Posterior vena cava (tissue), 2 donors: ENCODE measurements at regions of chr19 and their contacts with region 1.

Region 1: GRCh38 chr19:36090910-36091695 is 19.8 kb upstream of the OVOL3 start:
- DNase-seq: no peak

Region 2: DNA sequence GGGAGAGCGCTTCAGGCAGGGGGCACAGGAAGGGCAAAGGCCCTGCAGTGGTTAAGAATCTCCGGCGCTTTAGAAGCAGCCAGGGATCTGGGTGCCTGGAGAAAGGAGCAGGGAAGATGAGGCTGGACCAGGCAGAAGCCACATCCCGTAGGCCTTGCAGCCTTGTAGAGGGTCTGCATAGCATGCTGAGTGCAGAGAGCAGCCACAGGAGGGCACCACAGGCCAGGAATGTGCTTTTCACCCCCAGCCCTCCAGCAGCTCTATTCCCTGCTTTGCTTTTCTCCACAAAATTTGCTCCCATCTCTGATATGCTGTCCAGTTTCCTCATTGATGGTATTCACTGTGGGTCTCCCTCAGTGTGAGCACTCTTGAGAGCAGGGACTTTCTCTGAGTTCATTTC is 30.7 kb before region 1 on chr19:
- intact Hi-C with region 1: no loop called
- DNase-seq: no peak

Region 3: GRCh38 chr19:36152352-36153091 is 61.4 kb after region 1 on chr19 and contains the start of gene COX7A1:
- intact Hi-C with region 1: loop called in 1 of 2 experiments (anchors 2 kb)
- DNase-seq: peak; percentile 91
- total RNA-seq, gene COX7A1: 232 to 242 TPM